ENCODE measurements at regions of chr5 and their contacts with region 1.

Region 1: GRCh38 chr5:22585474-22585873 is 267.7 kb downstream of the CDH12 start:
- DNase-seq: no peak
- H3K4me3 ChIP-seq: no peak overlapping the region
- H3K27ac ChIP-seq: no peak overlapping the region
- H3K4me1 ChIP-seq: no peaks in the 10 kb centered on the region
- H3K27me3 ChIP-seq: no peaks in the 10 kb centered on the region
- CTCF ChIP-seq: no peak
- EP300 ChIP-seq: no peak
- POLR2A ChIP-seq: no peak

Region 2: DNA sequence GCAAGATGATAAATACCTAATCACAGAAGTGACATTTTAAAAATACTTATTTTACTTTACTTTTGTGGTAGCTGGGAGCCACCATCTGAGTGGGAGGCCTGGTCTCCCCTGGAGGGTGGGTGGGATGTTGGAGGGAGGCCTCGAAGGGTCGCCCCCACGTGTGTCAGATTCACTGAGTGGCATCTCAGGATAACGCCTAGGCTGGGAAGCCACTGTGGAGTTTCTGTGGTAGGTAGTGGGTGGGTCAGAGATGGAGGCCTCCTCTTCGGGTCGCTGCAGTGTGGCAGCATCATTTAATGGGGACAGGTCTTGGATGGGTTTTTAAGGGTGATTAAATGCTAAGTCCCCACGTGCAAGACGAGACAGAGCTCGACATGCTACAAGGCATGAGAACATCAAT is 1442.7 kb before region 1 on chr5:
- intact Hi-C with region 1: loop called in 1 of 4 experiments (anchors 5 kb)
- DNase-seq: no peak
- H3K4me3 ChIP-seq: no peak overlapping the region
- H3K27ac ChIP-seq: no peak overlapping the region
- H3K4me1 ChIP-seq: no peaks in the 10 kb centered on the region
- H3K27me3 ChIP-seq: no peaks in the 10 kb centered on the region
- CTCF ChIP-seq: no peak
- EP300 ChIP-seq: no peak
- POLR2A ChIP-seq: no peak

Region 3: DNA sequence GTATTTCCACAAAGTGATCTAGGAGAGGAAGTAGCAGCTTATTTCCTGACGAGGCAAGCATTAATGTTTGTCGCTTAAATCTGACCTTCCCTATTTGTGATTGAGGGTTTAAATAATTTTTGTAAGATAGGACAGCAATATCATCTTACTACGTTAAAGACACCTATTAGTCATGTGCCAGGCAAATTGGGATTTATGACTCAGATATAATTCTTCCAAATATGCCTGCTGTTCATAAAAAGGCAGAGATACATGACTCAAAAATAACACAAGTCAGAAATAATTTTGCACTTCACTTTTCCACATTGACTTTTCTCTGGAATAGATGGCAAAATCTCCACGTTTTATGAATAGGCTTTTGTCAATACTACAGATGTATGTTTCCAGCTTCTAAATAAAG is 310.7 kb after region 1 on chr5:
- intact Hi-C with region 1: loop called in 1 of 4 experiments (anchors 5 kb)
- DNase-seq: no peak
- H3K4me3 ChIP-seq: no peak overlapping the region
- H3K27ac ChIP-seq: no peak overlapping the region
- H3K4me1 ChIP-seq: no peaks in the 10 kb centered on the region
- H3K27me3 ChIP-seq: no peaks in the 10 kb centered on the region
- CTCF ChIP-seq: no peak
- EP300 ChIP-seq: no peak
- POLR2A ChIP-seq: no peak